ENCODE measurements at regions of chr6 and their contacts with region 1.

Region 1: DNA sequence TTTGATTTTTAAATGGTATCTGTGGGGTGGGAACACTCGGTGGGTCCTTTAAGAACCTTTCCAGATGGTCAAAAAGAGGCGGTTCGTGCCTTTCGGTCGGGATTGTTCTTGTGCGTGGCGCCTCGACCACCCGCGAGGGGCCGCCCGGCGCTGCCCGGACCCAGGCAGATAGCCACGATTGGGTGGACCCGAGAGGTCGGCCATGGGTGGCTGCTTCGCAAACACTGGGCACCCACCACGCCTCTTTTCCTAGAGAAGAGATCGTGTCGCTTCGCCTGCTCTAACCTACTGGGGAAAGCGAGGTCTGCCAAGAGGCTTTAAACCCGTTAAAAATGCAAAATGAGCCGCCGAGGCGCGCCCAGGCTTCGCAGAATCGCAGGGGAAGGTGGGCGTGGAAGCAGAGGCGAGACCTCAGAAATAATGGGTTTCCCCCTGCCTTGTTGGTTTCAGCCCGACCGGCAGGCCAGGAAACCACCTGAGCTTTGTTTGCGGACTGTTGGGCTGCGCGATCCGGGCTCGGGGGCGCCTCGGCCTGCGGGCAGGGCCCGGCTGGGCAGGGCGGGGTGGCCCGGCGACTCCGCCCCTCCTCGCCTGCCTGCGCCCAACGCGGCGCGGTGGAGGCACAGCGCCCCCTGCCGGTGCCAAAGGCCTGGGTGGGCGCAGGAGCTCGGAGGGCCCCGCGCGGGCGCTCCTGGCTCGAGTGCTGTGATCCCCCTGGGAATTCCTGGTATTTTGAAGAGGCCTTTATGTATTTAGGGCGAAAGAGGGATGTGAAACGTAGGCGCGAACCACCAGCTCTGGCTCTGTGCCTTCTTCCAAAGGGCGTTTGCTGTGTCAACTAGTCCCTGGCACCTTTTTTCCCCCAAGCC is 1.6 kb downstream of the MARCKS start:
- DNase-seq: peak; percentile 94
- ATAC-seq: peak; percentile 91

Region 2: GRCh38 chr6:112780498-112781096 is 1078.1 kb before region 1 on chr6:
- intact Hi-C with region 1: loop called (anchors 1 kb)
- DNase-seq: no peak
- ATAC-seq: peak; percentile 91

Region 3: GRCh38 chr6:113172531-113172966 is 686.2 kb before region 1 on chr6:
- intact Hi-C with region 1: loop called (anchors 10 kb)
- DNase-seq: no peak
- ATAC-seq: peak; percentile 92

Region 4: DNA sequence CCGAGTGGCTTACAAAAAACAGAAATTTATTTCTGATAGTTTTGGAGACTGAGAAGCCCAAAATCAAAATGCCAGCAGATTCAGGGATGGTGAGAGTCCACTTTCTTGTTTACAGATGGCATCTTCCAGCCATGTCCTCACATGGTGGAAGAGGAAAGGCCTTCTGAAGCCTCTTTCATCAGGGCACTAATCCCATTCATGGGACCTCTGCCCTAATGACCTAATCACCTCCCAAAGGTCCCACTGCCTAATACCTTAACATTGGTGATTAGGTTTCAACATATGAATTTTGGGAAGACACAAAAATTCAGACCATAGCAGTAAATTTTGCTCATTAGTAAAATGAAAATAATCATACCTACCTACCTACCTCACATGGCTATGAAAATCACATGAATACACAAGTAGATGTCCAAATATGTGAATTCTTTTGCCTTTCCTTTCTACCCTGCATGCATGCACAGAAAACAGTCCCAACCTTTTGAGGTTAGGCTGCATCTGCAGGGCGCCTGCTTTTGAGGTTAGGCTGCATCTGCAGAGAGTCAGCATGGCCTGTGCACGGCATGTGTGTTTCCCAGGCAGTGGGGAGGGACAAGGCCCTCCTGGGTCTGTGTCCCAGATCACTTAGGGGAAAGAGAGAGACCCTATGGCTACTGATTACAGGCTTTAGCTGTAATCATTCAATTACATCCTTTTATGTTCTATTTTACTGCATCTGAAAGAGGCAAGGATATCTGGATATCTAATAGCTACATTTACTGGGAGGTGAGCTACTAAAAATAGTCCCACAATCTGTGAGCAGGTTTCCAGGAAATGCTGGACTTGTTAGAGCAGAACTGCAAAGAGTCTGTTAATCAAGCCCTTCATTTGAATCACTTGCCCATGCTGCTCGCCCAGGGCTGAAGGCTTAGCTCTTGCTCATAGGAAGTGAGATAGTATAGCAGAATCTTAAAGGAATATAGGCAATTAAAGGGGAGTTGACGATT is 499.3 kb before region 1 on chr6:
- intact Hi-C with region 1: loop called (anchors 5 kb)
- DNase-seq: no peak
- ATAC-seq: no peak

Region 5: GRCh38 chr6:113495506-113495905 is 363.2 kb before region 1 on chr6:
- intact Hi-C with region 1: loop called (anchors 10 kb)
- DNase-seq: no peak
- ATAC-seq: no peak

Region 6: GRCh38 chr6:113672491-113673149 is 186.1 kb before region 1 on chr6:
- intact Hi-C with region 1: loop called (anchors 5 kb)
- DNase-seq: peak; percentile 84
- ATAC-seq: peak; percentile 84

Region 7: DNA sequence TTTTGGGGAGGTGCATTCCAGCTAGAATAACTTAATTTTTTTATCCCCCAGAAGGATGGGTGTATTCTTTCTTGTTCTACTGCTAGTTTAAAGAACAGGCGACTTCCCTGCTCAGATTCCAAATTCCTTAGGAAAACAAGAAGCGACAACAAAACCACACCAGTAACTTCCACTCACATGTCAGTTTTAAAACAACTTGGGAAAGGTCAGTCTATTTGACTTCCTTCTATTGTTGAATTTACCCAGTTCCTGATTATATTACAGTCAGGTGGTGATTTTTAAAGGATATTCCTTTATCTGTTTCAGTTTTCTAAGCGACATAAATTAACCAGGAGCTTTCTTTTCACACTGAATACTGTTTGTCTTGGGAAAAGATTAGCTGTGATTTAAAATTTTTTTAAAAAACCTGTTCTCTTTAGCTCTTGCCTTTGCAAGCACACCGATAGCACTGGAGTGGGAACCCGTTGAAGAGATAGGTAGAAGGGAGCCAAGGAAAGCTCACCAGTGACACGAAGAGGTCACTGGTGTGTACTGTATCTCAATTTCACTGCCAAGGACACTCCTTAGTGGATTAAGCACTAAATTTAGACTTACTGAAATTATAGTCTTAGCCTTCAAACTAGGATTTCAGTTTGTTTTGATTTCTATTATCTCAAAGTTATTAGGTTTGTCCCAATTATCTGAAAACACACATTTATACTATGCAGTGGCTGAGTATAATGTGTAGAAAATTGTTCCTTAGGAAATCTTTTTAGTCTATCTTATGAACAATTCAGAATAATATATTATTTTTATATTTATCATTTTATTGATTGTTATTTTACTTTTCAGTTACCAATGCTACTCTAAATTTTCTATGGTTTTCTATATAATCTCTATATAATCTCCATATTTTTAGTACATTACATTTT is 20.7 kb after region 1 on chr6:
- intact Hi-C with region 1: loop called (anchors 2 kb)
- DNase-seq: no peak
- ATAC-seq: peak; percentile 98

Region 8: GRCh38 chr6:113920663-113921267 is 62.1 kb after region 1 on chr6:
- intact Hi-C with region 1: no loop called
- DNase-seq: no peak
- ATAC-seq: peak; percentile 34

Measured in Right ventricle myocardium inferior (tissue), 1 donor.